A673 (cell line): ENCODE measurements at regions of chr3 and their contacts with region 1.

Region 1: GRCh38 chr3:88180398-88180999 is 30.7 kb downstream of the C3orf38 start:
- DNase-seq: peak; percentile 88
- H3K4me3 ChIP-seq: no peak overlapping the region
- H3K27ac ChIP-seq: no peak overlapping the region
- H3K4me1 ChIP-seq: peaks cover 25% of the 10 kb centered on the region
- H3K27me3 ChIP-seq: no peaks in the 10 kb centered on the region
- CTCF ChIP-seq: peak; percentile 72

Region 2: GRCh38 chr3:86774082-86774691 is 1406.3 kb before region 1 on chr3:
- CTCF ChIA-PET with region 1: no interaction called
- POLR2A ChIA-PET with region 1: no interaction called
- intact Hi-C with region 1: loop called (anchors 5 kb)
- DNase-seq: peak; percentile 63
- H3K4me3 ChIP-seq: no peak overlapping the region
- H3K27ac ChIP-seq: no peak overlapping the region
- H3K4me1 ChIP-seq: no peaks in the 10 kb centered on the region
- H3K27me3 ChIP-seq: no peaks in the 10 kb centered on the region
- CTCF ChIP-seq: peak; percentile 68

Region 3: GRCh38 chr3:87260270-87260669 is 920.2 kb before region 1 on chr3:
- CTCF ChIA-PET with region 1: no interaction called
- POLR2A ChIA-PET with region 1: no interaction called
- intact Hi-C with region 1: loop called (anchors 10 kb)
- DNase-seq: peak; percentile 89
- H3K4me3 ChIP-seq: no peak overlapping the region
- H3K27ac ChIP-seq: peak overlapping the region; percentile 18
- H3K4me1 ChIP-seq: peaks cover 52% of the 10 kb centered on the region
- H3K27me3 ChIP-seq: no peaks in the 10 kb centered on the region
- CTCF ChIP-seq: peak; percentile 80

Region 4: GRCh38 chr3:87298111-87298718 is 882.3 kb before region 1 on chr3:
- CTCF ChIA-PET with region 1: no interaction called
- POLR2A ChIA-PET with region 1: no interaction called
- intact Hi-C with region 1: loop called (anchors 5 kb)
- DNase-seq: peak; percentile 84
- H3K4me3 ChIP-seq: no peak overlapping the region
- H3K27ac ChIP-seq: peak overlapping the region; percentile 17
- H3K4me1 ChIP-seq: peaks cover 43% of the 10 kb centered on the region
- H3K27me3 ChIP-seq: no peaks in the 10 kb centered on the region
- CTCF ChIP-seq: peak; percentile 85

Region 5: GRCh38 chr3:87541723-87542122 is 638.8 kb before region 1 on chr3:
- CTCF ChIA-PET with region 1: no interaction called
- POLR2A ChIA-PET with region 1: no interaction called
- intact Hi-C with region 1: loop called (anchors 5 kb)
- DNase-seq: no peak
- H3K4me3 ChIP-seq: no peak overlapping the region
- H3K27ac ChIP-seq: no peak overlapping the region
- H3K4me1 ChIP-seq: peaks cover 9% of the 10 kb centered on the region
- H3K27me3 ChIP-seq: no peaks in the 10 kb centered on the region
- CTCF ChIP-seq: no peak

Region 6: GRCh38 chr3:88282528-88283241 is 102.2 kb after region 1 on chr3:
- CTCF ChIA-PET with region 1: no interaction called
- POLR2A ChIA-PET with region 1: no interaction called
- intact Hi-C with region 1: no loop called
- DNase-seq: no peak
- H3K4me3 ChIP-seq: no peak overlapping the region
- H3K27ac ChIP-seq: no peak overlapping the region
- H3K4me1 ChIP-seq: no peaks in the 10 kb centered on the region
- H3K27me3 ChIP-seq: no peaks in the 10 kb centered on the region
- CTCF ChIP-seq: no peak